ENCODE measurements at regions of chr5 and their contacts with region 1.

Region 1: GRCh38 chr5:150458819-150459557 is 9.4 kb upstream of the RPS14 start:
- DNase-seq: peak; percentile 88
- ATAC-seq: peak; percentile 96

Region 2: GRCh38 chr5:150544611-150545219 is 85.7 kb after region 1 on chr5:
- intact Hi-C with region 1: loop called (anchors 2 kb)
- DNase-seq: peak; percentile 86
- ATAC-seq: peak; percentile 79

Measured in left ventricle myocardium superior (tissue), 1 donor.